PC-3 (cell line): ENCODE measurements at regions of chrX and their contacts with region 1.

Region 1: GRCh38 chrX:103629318-103630170 is 769 bp downstream of the TCEAL1 start:
- DNase-seq: peak; percentile 75
- ATAC-seq: peak; percentile 80
- H3K4me3 ChIP-seq: peak overlapping the region; percentile 96
- H3K27ac ChIP-seq: peak overlapping the region; percentile 88
- H3K4me1 ChIP-seq: peaks cover 19% of the 10 kb centered on the region
- H3K27me3 ChIP-seq: no peaks in the 10 kb centered on the region
- CTCF ChIP-seq: peak; percentile 92

Region 2: GRCh38 chrX:103585411-103586313 is 43.9 kb before region 1 on chrX and contains the start of gene TCEAL4:
- CTCF ChIA-PET with region 1: no interaction called
- POLR2A ChIA-PET with region 1: no interaction called
- intact Hi-C with region 1: loop called (anchors 5 kb)
- DNase-seq: peak; percentile 31
- ATAC-seq: peak; percentile 80
- H3K4me3 ChIP-seq: peak within 1 kb of the TSS; percentile 98
- H3K27ac ChIP-seq: peak within 1 kb of the TSS; percentile 53
- H3K4me1 ChIP-seq: peaks cover 6% of the 10 kb centered on the region; the same call in 1 of the 2 replicates
- H3K27me3 ChIP-seq: no peaks in the 10 kb centered on the region
- CTCF ChIP-seq: no peak
- total RNA-seq, gene TCEAL4: 29.8 and 40.8 TPM in 2 replicates

Region 3: DNA sequence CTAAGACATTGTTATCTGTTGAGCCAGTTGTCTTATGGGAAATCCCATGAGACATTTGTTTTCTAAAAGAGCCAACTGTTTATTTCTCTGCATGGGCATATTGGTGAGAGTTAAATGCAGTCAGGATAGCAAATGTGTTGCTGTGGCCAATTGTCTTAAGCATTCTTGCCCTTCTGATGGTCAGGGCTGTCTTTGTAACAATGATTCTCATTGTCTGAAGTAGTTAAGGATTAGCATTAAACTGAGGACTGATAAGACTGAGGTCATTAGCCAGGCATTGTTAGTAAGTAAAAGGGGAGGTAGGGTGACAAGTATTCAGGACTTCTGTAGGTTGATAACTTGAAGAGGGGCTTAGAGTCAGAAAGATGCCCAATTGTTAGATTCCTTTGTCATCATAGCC is 68.1 kb after region 1 on chrX:
- CTCF ChIA-PET with region 1: no interaction called
- POLR2A ChIA-PET with region 1: no interaction called
- intact Hi-C with region 1: no loop called
- DNase-seq: no peak
- ATAC-seq: no peak
- H3K4me3 ChIP-seq: no peak overlapping the region
- H3K27ac ChIP-seq: no peak overlapping the region
- H3K4me1 ChIP-seq: peaks cover 8% of the 10 kb centered on the region
- H3K27me3 ChIP-seq: no peaks in the 10 kb centered on the region
- CTCF ChIP-seq: no peak

Region 4: GRCh38 chrX:103910371-103910770 is 280.8 kb after region 1 on chrX:
- CTCF ChIA-PET with region 1: no interaction called
- POLR2A ChIA-PET with region 1: no interaction called
- intact Hi-C with region 1: no loop called
- DNase-seq: no peak
- ATAC-seq: no peak
- H3K4me3 ChIP-seq: no peak overlapping the region
- H3K27ac ChIP-seq: no peak overlapping the region
- H3K4me1 ChIP-seq: no peaks in the 10 kb centered on the region; the same call in 1 of the 2 replicates
- H3K27me3 ChIP-seq: no peaks in the 10 kb centered on the region
- CTCF ChIP-seq: no peak